ENCODE measurements at regions of chr6 and their contacts with region 1.

Region 1: GRCh38 chr6:7589949-7590917 is at the start of gene SNRNP48:
- DNase-seq: peak; percentile 98
- H3K4me3 ChIP-seq: peak within 1 kb of the TSS; percentile 75 to 94 (median 92)
- H3K27ac ChIP-seq: peak within 1 kb of the TSS; percentile 75 to 81 (median 76)
- H3K4me1 ChIP-seq: peaks cover 21 to 33% (median 31%) of the 10 kb centered on the region in 4 donors
- H3K27me3 ChIP-seq: no peaks in the 10 kb centered on the region
- CTCF ChIP-seq: no peak
- EP300 ChIP-seq: no peak
- POLR2A ChIP-seq: peak; percentile 17
- total RNA-seq, gene SNRNP48: 8.9 to 17.0 (median 9.5) TPM

Region 2: GRCh38 chr6:7312616-7313504 is 277.4 kb before region 1 on chr6 and contains the start of gene SSR1:
- intact Hi-C with region 1: loop called (anchors 5 kb)
- DNase-seq: peak; percentile 98
- H3K4me3 ChIP-seq: peak within 1 kb of the TSS; percentile 84 to 99 (median 96)
- H3K27ac ChIP-seq: peak within 1 kb of the TSS; percentile 91 to 99 (median 95)
- H3K4me1 ChIP-seq: peaks cover 22 to 38% (median 36%) of the 10 kb centered on the region in 4 donors
- H3K27me3 ChIP-seq: peaks cover 0 to 7% (median 0%) of the 10 kb centered on the region in 4 donors
- CTCF ChIP-seq: peak in 2 of 3 experiments; percentile 11 to 19
- EP300 ChIP-seq: no peak
- POLR2A ChIP-seq: peak; percentile 15
- total RNA-seq, gene SSR1: 29.5 to 41.3 (median 34.2) TPM

Region 3: GRCh38 chr6:7656355-7656754 is 66.1 kb after region 1 on chr6:
- intact Hi-C with region 1: no loop called
- DNase-seq: no peak
- H3K4me3 ChIP-seq: no peak overlapping the region
- H3K27ac ChIP-seq: no peak overlapping the region
- H3K4me1 ChIP-seq: no peaks in the 10 kb centered on the region
- H3K27me3 ChIP-seq: peaks cover 0 to 14% (median 0%) of the 10 kb centered on the region in 4 donors
- CTCF ChIP-seq: no peak
- EP300 ChIP-seq: no peak
- POLR2A ChIP-seq: no peak